ENCODE measurements at regions of chr7 and their contacts with region 1.

Region 1: GRCh38 chr7:135454060-135454459 is 55.8 kb downstream of the CNOT4 start:
- DNase-seq: no peak
- H3K4me3 ChIP-seq: no peak overlapping the region
- H3K27ac ChIP-seq: no peak overlapping the region
- H3K4me1 ChIP-seq: no peaks in the 10 kb centered on the region
- H3K27me3 ChIP-seq: no peaks in the 10 kb centered on the region
- CTCF ChIP-seq: no peak

Region 2: DNA sequence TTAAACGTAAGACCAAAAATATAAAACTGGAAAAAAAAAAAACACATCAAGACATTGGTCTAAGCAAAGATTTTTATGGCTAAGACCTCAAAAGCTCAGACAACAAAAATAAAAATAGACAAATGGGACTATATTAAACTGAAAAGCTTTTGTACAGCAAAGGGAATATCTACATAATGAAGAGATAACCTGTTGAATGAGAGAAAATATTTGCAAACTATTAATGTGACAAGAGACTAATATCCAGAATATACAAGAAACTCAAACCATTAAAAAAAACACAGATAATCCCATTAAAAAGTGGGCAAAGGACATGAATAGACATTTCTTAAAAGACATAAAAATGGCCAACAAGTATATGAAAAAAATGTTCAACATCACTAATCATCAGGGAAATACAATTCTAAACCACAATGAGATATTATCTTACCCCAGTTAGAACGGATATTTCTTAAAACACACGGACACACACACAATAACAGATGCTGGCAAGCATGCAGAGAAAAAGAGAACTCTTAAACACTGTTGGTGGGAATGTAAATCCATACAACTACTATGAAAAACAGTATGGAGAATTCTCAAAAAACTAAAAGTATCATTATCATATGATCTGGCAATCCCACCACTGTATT is 27.0 kb after region 1 on chr7:
- CTCF ChIA-PET with region 1: no interaction called
- POLR2A ChIA-PET with region 1: interaction called, 32 read pairs
- intact Hi-C with region 1: no loop called
- DNase-seq: no peak
- H3K4me3 ChIP-seq: no peak overlapping the region
- H3K27ac ChIP-seq: no peak overlapping the region
- H3K4me1 ChIP-seq: 0 out of 2 replicates have a peak, but pooled peaks cover 1% of the 10 kb centered on the region
- H3K27me3 ChIP-seq: no peaks in the 10 kb centered on the region
- CTCF ChIP-seq: no peak

Region 3: DNA sequence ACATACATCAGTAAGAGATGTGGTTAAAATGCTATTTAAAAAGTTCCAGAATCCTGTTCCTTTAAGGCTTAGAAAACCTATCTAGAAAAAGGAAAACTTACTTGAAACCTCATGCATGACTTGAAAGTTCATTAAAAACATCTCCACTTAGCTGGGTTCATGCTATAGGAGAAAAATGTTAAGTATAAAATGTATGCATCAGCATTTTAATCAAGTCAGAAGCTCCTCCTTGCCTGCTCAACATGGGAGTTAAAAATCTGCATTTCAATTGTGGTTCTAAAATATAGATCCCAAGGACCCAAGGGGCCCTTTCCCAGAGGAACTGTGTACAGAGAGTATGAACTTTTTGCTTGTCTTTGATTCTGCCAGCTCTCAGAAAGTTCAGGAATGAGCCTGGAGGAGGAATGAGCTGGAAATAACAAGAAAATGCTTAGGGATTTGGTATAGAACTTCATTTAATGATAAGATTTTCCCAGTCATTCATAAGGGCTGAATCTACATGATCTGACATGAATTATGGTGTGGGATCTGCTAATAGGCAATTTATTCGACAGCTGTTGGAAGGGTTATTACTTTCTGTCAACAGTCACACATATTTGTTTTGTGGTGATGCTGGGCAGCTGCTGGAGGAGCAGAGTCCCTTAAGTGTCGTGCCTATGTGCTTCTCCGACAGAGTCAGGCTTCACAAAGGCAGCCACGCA is 608.7 kb after region 1 on chr7:
- CTCF ChIA-PET with region 1: no interaction called
- POLR2A ChIA-PET with region 1: no interaction called
- intact Hi-C with region 1: no loop called
- DNase-seq: no peak
- H3K4me3 ChIP-seq: no peak overlapping the region
- H3K27ac ChIP-seq: no peak overlapping the region
- H3K4me1 ChIP-seq: no peaks in the 10 kb centered on the region
- H3K27me3 ChIP-seq: no peaks in the 10 kb centered on the region
- CTCF ChIP-seq: no peak

Region 4: GRCh38 chr7:137399827-137400823 is 1946.1 kb after region 1 on chr7:
- CTCF ChIA-PET with region 1: no interaction called
- POLR2A ChIA-PET with region 1: no interaction called
- intact Hi-C with region 1: no loop called
- DNase-seq: peak; percentile 35 to 57
- H3K4me3 ChIP-seq: no peak overlapping the region
- H3K27ac ChIP-seq: no peak overlapping the region
- H3K4me1 ChIP-seq: peaks cover 6% of the 10 kb centered on the region; the same call in 1 of the 2 replicates
- H3K27me3 ChIP-seq: no peaks in the 10 kb centered on the region
- CTCF ChIP-seq: no peak

Measured in PC-9 (cell line).